Activated CD8-positive, alpha-beta T cell treated with anti-CD3 and anti-CD28 coated beads for 36 hours (primary cell): ENCODE measurements at regions of chr16 and their contacts with region 1.

Region 1: GRCh38 chr16:22077700-22078313 is 14.5 kb upstream of the VWA3A start:
- DNase-seq: peak; percentile 89
- ATAC-seq: peak; percentile 67
- H3K4me3 Mint-ChIP-seq: no peak overlapping the region
- H3K27ac Mint-ChIP-seq: no peak overlapping the region
- H3K4me1 Mint-ChIP-seq: peaks cover 2% of the 10 kb centered on the region
- H3K27me3 Mint-ChIP-seq: no peaks in the 10 kb centered on the region
- CTCF ChIP-seq: peak; percentile 93

Region 2: GRCh38 chr16:21982108-21982507 is 95.7 kb before region 1 on chr16:
- CTCF ChIA-PET with region 1: interaction called, 29 read pairs
- POLR2A ChIA-PET with region 1: no interaction called
- intact Hi-C with region 1: no loop called
- DNase-seq: no peak
- ATAC-seq: peak; percentile 53
- H3K4me3 Mint-ChIP-seq: no peak overlapping the region
- H3K27ac Mint-ChIP-seq: no peak overlapping the region
- H3K4me1 Mint-ChIP-seq: no peaks in the 10 kb centered on the region
- H3K27me3 Mint-ChIP-seq: no peaks in the 10 kb centered on the region
- CTCF ChIP-seq: no peak

Region 3: DNA sequence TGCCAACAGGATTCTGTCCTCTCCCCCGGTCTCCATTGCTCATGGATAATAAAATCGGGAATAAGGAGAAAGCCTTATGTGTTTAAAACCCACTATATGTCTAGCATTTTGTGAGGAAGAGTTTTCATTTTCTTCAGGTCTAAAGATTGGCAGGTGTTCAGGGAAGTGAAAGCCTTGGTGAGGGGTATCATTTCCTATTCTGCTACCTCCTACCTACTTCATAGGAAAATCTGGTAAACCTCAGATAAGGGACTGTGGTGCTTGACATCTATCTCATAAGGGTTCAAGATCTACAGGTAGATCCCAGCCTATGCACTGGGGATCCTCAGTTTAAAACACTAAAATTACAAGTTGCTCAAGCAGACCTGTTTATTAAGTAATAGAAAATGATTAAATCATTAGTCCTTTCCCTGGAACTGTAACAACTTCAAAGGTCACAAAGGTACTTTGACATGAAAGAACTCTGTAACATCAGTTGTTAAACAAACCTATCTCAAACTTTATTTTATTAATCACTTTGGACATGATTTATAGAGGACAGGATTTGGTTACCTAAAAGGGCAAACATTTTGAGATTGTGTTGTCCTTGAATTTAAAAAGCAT is 63.4 kb before region 1 on chr16:
- CTCF ChIA-PET with region 1: interaction called, 430 read pairs
- POLR2A ChIA-PET with region 1: interaction called, 9 read pairs
- intact Hi-C with region 1: no loop called
- DNase-seq: no peak
- ATAC-seq: no peak
- H3K4me3 Mint-ChIP-seq: no peak overlapping the region
- H3K27ac Mint-ChIP-seq: no peak overlapping the region
- H3K4me1 Mint-ChIP-seq: peaks cover 79% of the 10 kb centered on the region
- H3K27me3 Mint-ChIP-seq: no peaks in the 10 kb centered on the region
- CTCF ChIP-seq: no peak

Region 4: GRCh38 chr16:22055878-22056277 is 21.9 kb before region 1 on chr16:
- CTCF ChIA-PET with region 1: interaction called, 24 read pairs
- POLR2A ChIA-PET with region 1: no interaction called
- intact Hi-C with region 1: no loop called
- DNase-seq: no peak
- ATAC-seq: no peak
- H3K4me3 Mint-ChIP-seq: no peak overlapping the region
- H3K27ac Mint-ChIP-seq: no peak overlapping the region
- H3K4me1 Mint-ChIP-seq: peaks cover 39% of the 10 kb centered on the region
- H3K27me3 Mint-ChIP-seq: no peaks in the 10 kb centered on the region
- CTCF ChIP-seq: no peak

Region 5: GRCh38 chr16:22098405-22099255 is 20.8 kb after region 1 on chr16:
- CTCF ChIA-PET with region 1: interaction called, 58 read pairs
- POLR2A ChIA-PET with region 1: no interaction called
- intact Hi-C with region 1: no loop called
- DNase-seq: peak; percentile 11
- ATAC-seq: peak; percentile 95
- H3K4me3 Mint-ChIP-seq: no peak overlapping the region
- H3K27ac Mint-ChIP-seq: no peak overlapping the region
- H3K4me1 Mint-ChIP-seq: no peaks in the 10 kb centered on the region
- H3K27me3 Mint-ChIP-seq: peaks cover 13% of the 10 kb centered on the region
- CTCF ChIP-seq: peak; percentile 62

Region 6: GRCh38 chr16:22195695-22196558 is 118.1 kb after region 1 on chr16:
- CTCF ChIA-PET with region 1: no interaction called
- POLR2A ChIA-PET with region 1: no interaction called
- intact Hi-C with region 1: no loop called
- DNase-seq: peak; percentile 95
- ATAC-seq: peak; percentile 12
- H3K4me3 Mint-ChIP-seq: peak overlapping the region; percentile 82
- H3K27ac Mint-ChIP-seq: peak overlapping the region; percentile 85
- H3K4me1 Mint-ChIP-seq: peaks cover 44% of the 10 kb centered on the region
- H3K27me3 Mint-ChIP-seq: peaks cover 2% of the 10 kb centered on the region
- CTCF ChIP-seq: peak; percentile 96

Region 7: DNA sequence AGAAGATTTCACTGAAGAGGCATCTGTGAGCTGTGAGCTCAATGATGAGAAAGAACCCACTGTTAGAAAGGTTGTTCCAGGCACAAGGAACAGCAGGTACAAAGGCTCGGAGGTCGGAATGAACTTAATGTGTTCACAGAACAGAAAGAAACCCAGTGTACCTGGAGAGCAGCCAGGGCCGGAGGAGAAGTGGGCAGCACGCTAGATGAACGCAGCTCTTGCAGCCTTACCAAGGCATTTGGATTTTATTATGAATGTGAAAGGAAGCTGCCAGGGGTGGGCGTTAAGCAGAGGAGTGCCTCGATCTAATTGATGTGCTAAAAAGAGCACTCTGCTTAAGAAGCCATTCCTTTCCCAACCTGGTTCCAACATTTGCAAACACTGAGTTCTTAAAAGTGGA is 147.3 kb after region 1 on chr16:
- CTCF ChIA-PET with region 1: no interaction called
- POLR2A ChIA-PET with region 1: no interaction called
- intact Hi-C with region 1: no loop called
- DNase-seq: no peak
- ATAC-seq: no peak
- H3K4me3 Mint-ChIP-seq: no peak overlapping the region
- H3K27ac Mint-ChIP-seq: no peak overlapping the region
- H3K4me1 Mint-ChIP-seq: peaks cover 17% of the 10 kb centered on the region
- H3K27me3 Mint-ChIP-seq: no peaks in the 10 kb centered on the region
- CTCF ChIP-seq: no peak

Region 8: DNA sequence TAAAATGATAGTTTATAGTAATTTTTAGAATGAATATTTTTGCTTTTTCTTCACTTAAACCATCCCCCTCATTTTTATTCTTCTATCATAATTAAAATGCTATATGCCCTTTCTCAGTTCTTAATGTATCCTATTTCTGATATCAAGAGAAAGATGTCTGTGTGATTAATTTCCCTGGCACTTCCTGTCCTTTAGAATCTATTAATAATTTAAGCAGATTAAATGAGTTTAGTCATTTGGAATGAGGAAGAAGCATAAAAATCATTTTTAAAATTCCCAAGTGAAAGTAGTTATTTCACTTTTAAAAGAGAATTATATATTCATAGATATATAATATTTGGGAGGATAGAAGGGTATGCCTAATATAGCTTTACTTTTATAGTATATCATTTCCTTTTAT is 324.4 kb after region 1 on chr16:
- CTCF ChIA-PET with region 1: no interaction called
- POLR2A ChIA-PET with region 1: no interaction called
- intact Hi-C with region 1: no loop called
- DNase-seq: no peak
- ATAC-seq: no peak
- H3K4me3 Mint-ChIP-seq: no peak overlapping the region
- H3K27ac Mint-ChIP-seq: no peak overlapping the region
- H3K4me1 Mint-ChIP-seq: peaks cover 2% of the 10 kb centered on the region
- H3K27me3 Mint-ChIP-seq: no peaks in the 10 kb centered on the region
- CTCF ChIP-seq: no peak